ENCODE measurements at regions of chr15 and their contacts with region 1.

Region 1: DNA sequence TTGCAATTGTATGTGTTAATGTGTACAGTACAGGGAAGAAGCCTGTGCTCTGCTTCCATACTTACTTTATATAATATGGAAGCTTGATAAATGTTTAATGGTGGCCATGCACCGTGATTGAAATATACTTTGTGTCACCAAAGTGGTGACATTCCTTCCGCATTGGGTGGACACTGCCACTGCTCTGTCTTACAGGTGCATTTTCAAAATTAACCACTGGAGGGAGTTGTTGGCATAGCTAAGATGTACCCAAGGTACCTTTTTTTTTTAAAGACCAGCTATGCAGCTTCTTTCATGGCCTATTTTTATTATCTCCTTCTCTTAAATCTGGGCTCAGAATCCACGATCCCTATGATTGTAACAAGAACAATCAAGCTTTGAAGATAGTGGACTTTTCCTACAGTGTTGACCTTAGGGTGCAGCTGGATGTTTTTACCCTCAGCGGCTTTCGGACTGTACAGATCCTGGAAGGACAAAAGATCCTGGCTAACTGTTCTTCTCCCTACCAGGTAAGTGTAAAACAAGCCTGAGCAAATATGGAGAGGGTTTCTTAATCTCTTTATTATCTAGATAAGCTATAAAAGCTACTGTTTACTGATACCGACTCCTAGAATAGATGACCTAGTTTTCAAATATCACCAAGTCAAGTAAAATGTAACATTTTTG is 21.6 kb upstream of the PAK6 start:
- DNase-seq: peak; percentile 52
- ATAC-seq: peak; percentile 93
- H3K4me3 Mint-ChIP-seq: no peak overlapping the region
- H3K27ac Mint-ChIP-seq: no peak overlapping the region
- H3K4me1 Mint-ChIP-seq: no peaks in the 10 kb centered on the region
- H3K27me3 Mint-ChIP-seq: no peaks in the 10 kb centered on the region
- CTCF ChIP-seq: peak; percentile 84

Region 2: DNA sequence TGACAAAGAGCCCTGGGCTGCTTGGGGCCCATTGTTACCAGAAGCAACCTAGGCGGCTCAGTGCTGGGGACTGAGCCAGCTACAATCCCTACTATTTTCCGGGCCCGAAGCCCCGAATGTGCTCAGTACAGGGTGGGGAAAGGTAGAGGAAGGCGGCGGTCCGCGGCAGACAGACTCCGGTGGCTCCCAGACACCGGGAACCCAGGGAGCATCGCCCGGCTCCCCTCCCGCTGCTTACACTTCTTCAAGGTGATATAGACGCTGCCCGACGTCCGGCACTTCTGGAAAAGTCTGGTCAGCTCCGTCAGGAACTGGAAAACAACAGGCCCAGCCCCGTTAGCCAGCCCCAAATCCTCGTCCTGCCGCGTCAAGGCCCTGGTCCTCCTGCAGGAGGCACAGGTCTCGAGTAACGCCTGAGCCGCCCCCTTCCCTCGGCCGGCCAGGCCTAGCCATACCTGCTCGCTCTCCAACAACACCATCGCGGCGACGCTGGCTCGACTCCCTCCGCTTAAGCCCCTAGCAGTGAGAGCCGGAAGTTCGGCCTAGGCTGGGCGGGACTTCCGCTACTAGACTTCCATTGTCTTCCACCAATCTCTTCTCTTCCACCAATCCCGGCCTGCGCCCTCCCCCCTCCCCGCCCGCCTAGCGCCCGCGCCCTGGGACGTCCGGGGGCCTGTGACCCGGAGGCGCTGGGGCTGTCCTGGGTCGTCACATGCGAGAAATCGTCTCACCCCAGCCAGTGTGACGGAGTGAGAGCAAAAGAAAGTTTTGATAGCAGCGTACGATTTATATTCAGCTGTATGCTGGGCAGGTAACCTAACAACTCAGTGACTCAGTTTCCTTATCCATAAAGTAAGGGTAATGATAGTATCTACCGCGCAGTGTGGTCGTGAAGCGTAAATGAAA is 178.4 kb before region 1 on chr15 and contains the start of gene SRP14:
- CTCF ChIA-PET with region 1: interaction called, 18 read pairs
- POLR2A ChIA-PET with region 1: no interaction called
- intact Hi-C with region 1: no loop called
- DNase-seq: peak; percentile 97
- ATAC-seq: peak; percentile 95
- H3K4me3 Mint-ChIP-seq: peak within 1 kb of the TSS; percentile 99
- H3K27ac Mint-ChIP-seq: peak within 1 kb of the TSS; percentile 94
- H3K4me1 Mint-ChIP-seq: peaks cover 54% of the 10 kb centered on the region
- H3K27me3 Mint-ChIP-seq: no peaks in the 10 kb centered on the region
- CTCF ChIP-seq: no peak
- total RNA-seq, gene SRP14: 147 to 152 TPM

Region 3: GRCh38 chr15:40197434-40197833 is 19.9 kb before region 1 on chr15:
- CTCF ChIA-PET with region 1: interaction called, 10 read pairs
- POLR2A ChIA-PET with region 1: no interaction called
- intact Hi-C with region 1: no loop called
- DNase-seq: no peak
- ATAC-seq: no peak
- H3K4me3 Mint-ChIP-seq: no peak overlapping the region
- H3K27ac Mint-ChIP-seq: no peak overlapping the region
- H3K4me1 Mint-ChIP-seq: peaks cover 24% of the 10 kb centered on the region
- H3K27me3 Mint-ChIP-seq: no peaks in the 10 kb centered on the region
- CTCF ChIP-seq: no peak

Region 4: GRCh38 chr15:40238532-40239403 is 21.5 kb after region 1 on chr15 and contains the start of gene PAK6:
- CTCF ChIA-PET with region 1: interaction called, 17 read pairs
- POLR2A ChIA-PET with region 1: interaction called, 4 read pairs
- intact Hi-C with region 1: no loop called
- DNase-seq: peak; percentile 65
- ATAC-seq: peak; percentile 83
- H3K4me3 Mint-ChIP-seq: no peak within 1 kb of the TSS
- H3K27ac Mint-ChIP-seq: no peak within 1 kb of the TSS
- H3K4me1 Mint-ChIP-seq: peaks cover 7% of the 10 kb centered on the region
- H3K27me3 Mint-ChIP-seq: peaks cover 18% of the 10 kb centered on the region
- CTCF ChIP-seq: no peak
- total RNA-seq, gene PAK6: 0.67 to 0.83 TPM

Region 5: GRCh38 chr15:40338041-40338657 is 120.9 kb after region 1 on chr15:
- CTCF ChIA-PET with region 1: interaction called, 12 read pairs
- POLR2A ChIA-PET with region 1: no interaction called
- intact Hi-C with region 1: no loop called
- DNase-seq: peak; percentile 88
- ATAC-seq: peak; percentile 96
- H3K4me3 Mint-ChIP-seq: no peak overlapping the region
- H3K27ac Mint-ChIP-seq: no peak overlapping the region
- H3K4me1 Mint-ChIP-seq: peaks cover 14% of the 10 kb centered on the region
- H3K27me3 Mint-ChIP-seq: no peaks in the 10 kb centered on the region
- CTCF ChIP-seq: peak; percentile 92

Measured in activated CD8-positive, alpha-beta T cell treated with anti-CD3 and anti-CD28 coated beads for 36 hours (primary cell).